Ovary (tissue), 10 donors: ENCODE measurements at regions of chr15 and their contacts with region 1.

Region 1: DNA sequence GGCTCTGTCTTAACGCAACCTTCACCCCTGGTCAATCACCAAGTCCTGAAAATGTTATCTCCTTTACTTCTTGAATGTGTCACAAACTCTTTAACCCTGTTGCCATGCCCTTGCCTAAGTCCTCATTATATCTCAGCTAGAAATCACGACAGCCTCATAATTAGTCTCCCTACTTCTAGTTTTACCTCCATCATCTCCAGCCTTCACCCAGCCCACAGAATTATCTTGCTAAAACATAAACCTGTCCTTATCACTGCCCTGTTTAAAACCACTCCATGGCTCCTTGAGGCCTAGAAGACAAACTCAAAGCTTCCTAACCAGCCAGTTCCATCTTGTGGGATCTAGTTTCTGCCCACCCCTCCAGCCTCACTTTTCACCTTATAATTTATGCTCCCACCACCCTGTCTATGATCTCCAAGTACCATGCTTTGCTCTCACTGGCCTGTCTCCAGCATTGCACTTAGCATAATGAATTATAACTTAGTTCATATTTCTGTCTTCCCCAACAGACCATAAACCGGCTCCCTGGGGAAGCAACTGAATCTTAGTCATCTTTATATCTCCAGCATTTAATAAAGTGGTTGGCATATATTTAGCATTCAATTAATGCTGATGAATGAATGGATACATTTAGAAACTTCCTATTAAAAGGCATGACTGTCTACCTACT is 39.2 kb downstream of the GPR176 start:
- DNase-seq: no peak
- H3K4me3 ChIP-seq: no peak overlapping the region
- H3K27ac ChIP-seq: no peak overlapping the region
- H3K4me1 ChIP-seq: no peaks in the 10 kb centered on the region
- H3K27me3 ChIP-seq: no peaks in the 10 kb centered on the region
- CTCF ChIP-seq: no peak
- EP300 ChIP-seq: no peak
- POLR2A ChIP-seq: no peak

Region 2: GRCh38 chr15:40825661-40826088 is 944.8 kb after region 1 on chr15:
- intact Hi-C with region 1: loop called in 1 of 4 experiments (anchors 5 kb)
- DNase-seq: no peak
- H3K4me3 ChIP-seq: no peak overlapping the region
- H3K27ac ChIP-seq: no peak overlapping the region
- H3K4me1 ChIP-seq: no peaks in the 10 kb centered on the region
- H3K27me3 ChIP-seq: no peaks in the 10 kb centered on the region
- CTCF ChIP-seq: no peak
- EP300 ChIP-seq: no peak
- POLR2A ChIP-seq: no peak